B cell (primary cell): ENCODE measurements at regions of chr14 and their contacts with region 1.

Region 1: GRCh38 chr14:65412032-65412846 is at the start of gene FUT8:
- DNase-seq: peak; percentile 96
- ATAC-seq: peak; percentile 84
- H3K4me3 ChIP-seq: peak within 1 kb of the TSS; percentile 77 to 97 (median 95)
- H3K4me3 Mint-ChIP-seq: peak within 1 kb of the TSS; percentile 94
- H3K27ac ChIP-seq: peak within 1 kb of the TSS; percentile 81 to 82
- H3K27ac Mint-ChIP-seq: peak within 1 kb of the TSS; percentile 96
- H3K4me1 ChIP-seq: peaks cover 13 to 20% of the 10 kb centered on the region in 2 donors
- H3K4me1 Mint-ChIP-seq: peaks cover 43% of the 10 kb centered on the region
- H3K27me3 ChIP-seq: no peaks in the 10 kb centered on the region
- H3K27me3 Mint-ChIP-seq: no peaks in the 10 kb centered on the region
- CTCF ChIP-seq: peak; percentile 70
- total RNA-seq, gene FUT8: 91.8 and 94.6 TPM in 2 replicates

Region 2: GRCh38 chr14:65102441-65103149 is 309.6 kb before region 1 on chr14 and contains the start of gene MAX:
- CTCF ChIA-PET with region 1: interaction called, 3 read pairs
- POLR2A ChIA-PET with region 1: interaction called, 6 read pairs
- intact Hi-C with region 1: loop called (anchors 1 kb)
- DNase-seq: peak; percentile 98
- ATAC-seq: peak; percentile 85
- H3K4me3 ChIP-seq: peak within 1 kb of the TSS; percentile 62 to 97 (median 93)
- H3K4me3 Mint-ChIP-seq: peak within 1 kb of the TSS; percentile 91
- H3K27ac ChIP-seq: peak within 1 kb of the TSS; percentile 95 to 97
- H3K27ac Mint-ChIP-seq: peak within 1 kb of the TSS; percentile 97
- H3K4me1 ChIP-seq: peaks cover 23 to 30% of the 10 kb centered on the region in 2 donors
- H3K4me1 Mint-ChIP-seq: peaks cover 38% of the 10 kb centered on the region
- H3K27me3 ChIP-seq: no peaks in the 10 kb centered on the region
- H3K27me3 Mint-ChIP-seq: no peaks in the 10 kb centered on the region
- CTCF ChIP-seq: no peak
- total RNA-seq, gene MAX: 127 and 130 TPM in 2 replicates

Region 3: DNA sequence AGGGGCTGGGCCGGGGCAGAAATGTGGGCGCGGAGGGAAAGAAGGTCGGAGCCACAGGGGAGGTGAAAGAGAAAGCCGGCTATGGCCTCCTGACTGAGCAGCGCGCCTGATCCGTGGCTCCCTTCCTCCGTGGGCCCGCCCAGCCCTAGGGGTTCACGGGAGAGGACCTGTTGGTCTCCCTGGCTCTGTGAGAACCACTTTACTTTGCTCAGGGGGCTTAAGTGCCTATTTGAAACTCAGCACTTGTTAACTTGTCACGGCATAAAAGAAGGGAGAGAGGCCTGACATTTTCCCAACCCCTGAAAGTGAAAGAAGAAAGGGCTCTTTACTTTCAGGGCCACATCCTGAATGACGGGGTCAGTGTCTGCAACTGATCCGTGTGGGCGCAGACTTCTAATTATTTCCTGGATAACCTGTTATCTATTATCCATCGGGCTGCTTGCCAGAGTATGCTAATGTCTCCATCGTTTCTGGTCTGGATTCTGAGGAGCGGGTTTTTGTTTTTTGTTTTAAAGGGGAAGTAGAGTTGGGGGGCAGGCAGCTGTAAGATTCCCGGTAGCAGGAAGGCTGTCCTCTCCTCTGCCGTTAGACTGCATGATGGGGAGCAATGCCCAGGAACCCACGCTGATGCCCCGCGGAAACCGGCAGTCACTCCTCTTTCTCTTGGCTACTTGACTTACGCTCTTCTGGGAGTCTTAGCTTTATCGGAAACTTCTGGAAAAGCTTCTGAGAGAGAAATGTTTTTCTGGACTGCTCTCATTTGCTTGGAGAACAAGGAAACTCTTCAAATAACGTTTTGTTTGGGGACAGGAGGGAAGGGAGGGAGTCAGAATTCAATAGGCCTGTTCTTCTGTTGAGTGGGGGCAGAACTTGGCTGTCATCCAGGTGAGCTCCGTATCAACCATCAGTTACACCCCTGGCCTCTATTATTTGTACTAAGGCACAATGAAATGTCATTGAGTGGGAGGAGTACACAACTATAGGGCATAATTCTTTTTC is 182.2 kb before region 1 on chr14:
- CTCF ChIA-PET with region 1: interaction called, 135 read pairs
- POLR2A ChIA-PET with region 1: interaction called, 5 read pairs
- intact Hi-C with region 1: loop called (anchors 1 kb)
- DNase-seq: peak; percentile 59
- ATAC-seq: peak; percentile 50
- H3K4me3 ChIP-seq: peak overlapping the region; percentile 36 to 60 (median 58)
- H3K4me3 Mint-ChIP-seq: peak overlapping the region; percentile 90
- H3K27ac ChIP-seq: peak overlapping the region; percentile 74 to 83
- H3K27ac Mint-ChIP-seq: peak overlapping the region; percentile 95
- H3K4me1 ChIP-seq: peaks cover 63 to 71% of the 10 kb centered on the region in 2 donors
- H3K4me1 Mint-ChIP-seq: peaks cover 58% of the 10 kb centered on the region
- H3K27me3 ChIP-seq: no peaks in the 10 kb centered on the region
- H3K27me3 Mint-ChIP-seq: no peaks in the 10 kb centered on the region
- CTCF ChIP-seq: no peak

Region 4: DNA sequence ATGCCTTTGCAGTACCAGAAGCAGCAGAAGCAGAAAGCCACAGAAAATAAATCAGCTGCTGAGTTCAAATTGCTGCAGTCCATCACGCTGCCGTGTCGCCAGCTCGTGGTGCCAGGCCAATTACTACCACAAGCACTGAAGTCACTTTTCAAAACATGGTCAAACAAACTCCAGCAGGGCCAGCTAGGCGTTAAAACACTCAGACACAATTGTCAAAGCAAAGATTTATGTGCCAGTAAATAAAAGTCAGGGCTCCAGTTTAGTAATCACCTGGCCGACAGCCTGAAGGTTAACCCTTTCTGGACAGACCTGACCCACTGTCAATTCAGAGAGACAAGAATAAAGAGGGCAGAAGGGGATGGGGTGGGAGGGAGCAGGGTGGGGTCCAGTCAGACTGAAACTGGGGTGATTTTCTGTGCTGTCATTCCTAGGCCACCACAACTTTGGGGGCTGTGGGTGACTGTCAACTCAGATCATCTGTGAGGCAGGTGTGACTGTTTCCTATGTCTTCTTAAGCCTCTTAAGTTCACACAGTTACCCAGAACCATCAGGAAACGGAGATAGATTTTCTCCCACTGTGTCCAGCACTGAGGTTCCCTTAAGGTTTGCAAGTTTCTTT is 109.6 kb before region 1 on chr14:
- CTCF ChIA-PET with region 1: interaction called, 38 read pairs
- POLR2A ChIA-PET with region 1: interaction called, 23 read pairs
- intact Hi-C with region 1: loop called (anchors 5 kb)
- DNase-seq: peak; percentile 44
- ATAC-seq: peak; percentile 8
- H3K4me3 ChIP-seq: no peak overlapping the region
- H3K4me3 Mint-ChIP-seq: peak overlapping the region; percentile 56
- H3K27ac ChIP-seq: peak overlapping the region; percentile 71 to 80
- H3K27ac Mint-ChIP-seq: peak overlapping the region; percentile 98
- H3K4me1 ChIP-seq: peaks cover 54 to 87% of the 10 kb centered on the region in 2 donors
- H3K4me1 Mint-ChIP-seq: peaks cover 75% of the 10 kb centered on the region
- H3K27me3 ChIP-seq: no peaks in the 10 kb centered on the region
- H3K27me3 Mint-ChIP-seq: no peaks in the 10 kb centered on the region
- CTCF ChIP-seq: no peak

Region 5: GRCh38 chr14:65423982-65424381 is 11.7 kb after region 1 on chr14:
- CTCF ChIA-PET with region 1: interaction called, 16 read pairs
- POLR2A ChIA-PET with region 1: no interaction called
- intact Hi-C with region 1: no loop called
- DNase-seq: no peak
- ATAC-seq: no peak
- H3K4me3 ChIP-seq: no peak overlapping the region
- H3K4me3 Mint-ChIP-seq: no peak overlapping the region
- H3K27ac ChIP-seq: no peak overlapping the region
- H3K27ac Mint-ChIP-seq: no peak overlapping the region
- H3K4me1 ChIP-seq: no peaks in the 10 kb centered on the region
- H3K4me1 Mint-ChIP-seq: peaks cover 48% of the 10 kb centered on the region
- H3K27me3 ChIP-seq: no peaks in the 10 kb centered on the region
- H3K27me3 Mint-ChIP-seq: no peaks in the 10 kb centered on the region
- CTCF ChIP-seq: no peak

Region 6: GRCh38 chr14:65824285-65824977 is 412.2 kb after region 1 on chr14:
- CTCF ChIA-PET with region 1: interaction called, 276 read pairs
- POLR2A ChIA-PET with region 1: interaction called, 6 read pairs
- intact Hi-C with region 1: loop called (anchors 1 kb)
- DNase-seq: peak; percentile 80
- ATAC-seq: peak; percentile 98
- H3K4me3 ChIP-seq: no peak overlapping the region
- H3K4me3 Mint-ChIP-seq: no peak overlapping the region
- H3K27ac ChIP-seq: no peak overlapping the region
- H3K27ac Mint-ChIP-seq: no peak overlapping the region
- H3K4me1 ChIP-seq: peaks cover 0 to 2% of the 10 kb centered on the region in 2 donors
- H3K4me1 Mint-ChIP-seq: peaks cover 3% of the 10 kb centered on the region
- H3K27me3 ChIP-seq: no peaks in the 10 kb centered on the region
- H3K27me3 Mint-ChIP-seq: peaks cover 3% of the 10 kb centered on the region
- CTCF ChIP-seq: peak; percentile 98